Calu3 (cell line): ENCODE measurements at regions of chr1 and their contacts with region 1.

Region 1: DNA sequence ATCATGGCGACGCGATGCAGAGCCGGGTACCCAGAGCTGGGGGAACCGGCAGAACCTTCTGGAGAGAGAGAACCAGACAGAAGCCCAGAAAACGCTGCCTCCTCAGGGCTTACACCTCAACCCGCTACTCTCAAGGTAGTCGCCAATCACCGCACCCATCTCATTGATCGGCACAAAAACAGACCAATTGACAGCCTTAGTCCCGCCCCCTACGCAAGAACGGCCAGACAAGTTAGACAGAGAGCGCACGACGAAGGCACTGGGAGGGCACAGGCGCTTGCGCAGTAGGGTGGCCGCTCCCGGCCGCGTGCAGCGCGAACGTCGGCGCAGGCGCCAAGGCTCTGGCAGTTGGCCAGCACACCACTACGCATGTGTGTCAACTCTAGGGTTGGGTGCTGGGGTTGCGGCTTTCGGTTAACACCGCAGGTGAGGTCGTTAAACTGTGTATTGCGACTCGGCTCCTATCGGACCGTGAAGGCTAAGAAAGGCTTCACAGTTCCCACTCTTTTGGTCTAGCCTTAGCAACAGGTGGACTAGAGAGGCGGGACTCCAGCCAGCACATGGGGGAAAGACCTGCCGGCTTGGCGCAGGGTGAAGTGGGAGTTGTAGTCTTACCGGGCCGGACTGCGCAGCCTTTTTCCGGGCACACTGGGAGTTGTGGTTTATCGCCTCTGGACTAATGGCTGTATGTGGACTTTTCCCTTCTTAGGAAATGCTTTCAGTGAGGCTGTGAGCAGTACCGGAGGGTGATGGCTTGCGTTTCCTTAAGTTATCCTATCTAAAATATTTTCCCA is at the starts of genes CCT3 and TSACC:
- DNase-seq: peak; percentile 100
- H3K4me3 Mint-ChIP-seq: peak within 1 kb of the TSS; percentile 98
- H3K27ac Mint-ChIP-seq: peak within 1 kb of the TSS; percentile 94
- H3K4me1 Mint-ChIP-seq: peaks cover 25% of the 10 kb centered on the region
- H3K27me3 Mint-ChIP-seq: peaks cover 9% of the 10 kb centered on the region
- CTCF ChIP-seq: no peak
- total RNA-seq, gene CCT3: 554 and 598 TPM in 2 replicates
- total RNA-seq, gene TSACC: 1.4 and 2.0 TPM in 2 replicates

Region 2: GRCh38 chr1:156282479-156283222 is 55.7 kb before region 1 on chr1 and contains the start of gene SMG5:
- CTCF ChIA-PET with region 1: interaction called, 4 read pairs
- intact Hi-C with region 1: loop called (anchors 5 kb)
- DNase-seq: peak; percentile 98
- H3K4me3 Mint-ChIP-seq: peak within 1 kb of the TSS; percentile 72
- H3K27ac Mint-ChIP-seq: peak within 1 kb of the TSS; percentile 78
- H3K4me1 Mint-ChIP-seq: peaks cover 19% of the 10 kb centered on the region
- H3K27me3 Mint-ChIP-seq: no peaks in the 10 kb centered on the region
- CTCF ChIP-seq: no peak
- total RNA-seq, gene SMG5: 117 and 118 TPM in 2 replicates

Region 3: GRCh38 chr1:156414461-156415064 is 76.2 kb after region 1 on chr1:
- CTCF ChIA-PET with region 1: no interaction called
- intact Hi-C with region 1: no loop called
- DNase-seq: no peak
- H3K4me3 Mint-ChIP-seq: no peak overlapping the region
- H3K27ac Mint-ChIP-seq: no peak overlapping the region
- H3K4me1 Mint-ChIP-seq: peaks cover 14% of the 10 kb centered on the region
- H3K27me3 Mint-ChIP-seq: peaks cover 91% of the 10 kb centered on the region
- CTCF ChIP-seq: no peak

Region 4: DNA sequence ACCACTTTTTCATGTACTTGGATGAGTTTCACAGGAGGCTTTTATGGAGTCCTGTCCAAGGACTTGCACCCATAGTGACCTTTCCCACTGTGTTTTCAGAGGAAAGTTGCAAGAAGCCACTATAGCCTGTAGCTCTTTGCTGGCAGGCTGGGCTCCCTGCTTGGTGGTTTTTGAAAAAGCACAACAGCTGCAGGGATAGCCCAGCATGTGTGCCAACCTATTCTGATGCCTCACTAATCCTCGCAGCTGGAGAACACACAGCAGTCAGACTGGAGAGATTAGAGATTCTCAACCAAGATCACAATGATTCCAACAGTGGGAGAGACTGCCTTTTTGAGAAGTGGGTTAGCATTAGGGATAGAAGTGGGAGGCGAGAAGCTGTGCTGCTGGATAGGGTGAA is 731.2 kb after region 1 on chr1:
- CTCF ChIA-PET with region 1: no interaction called
- intact Hi-C with region 1: no loop called
- DNase-seq: no peak
- H3K4me3 Mint-ChIP-seq: no peak overlapping the region
- H3K27ac Mint-ChIP-seq: no peak overlapping the region
- H3K4me1 Mint-ChIP-seq: no peaks in the 10 kb centered on the region
- H3K27me3 Mint-ChIP-seq: peaks cover 10% of the 10 kb centered on the region
- CTCF ChIP-seq: no peak